Activated CD4-positive, alpha-beta T cell treated with anti-CD3 and anti-CD28 coated beads for 36 hours (primary cell): ENCODE measurements at regions of chr5 and their contacts with region 1.

Region 1: DNA sequence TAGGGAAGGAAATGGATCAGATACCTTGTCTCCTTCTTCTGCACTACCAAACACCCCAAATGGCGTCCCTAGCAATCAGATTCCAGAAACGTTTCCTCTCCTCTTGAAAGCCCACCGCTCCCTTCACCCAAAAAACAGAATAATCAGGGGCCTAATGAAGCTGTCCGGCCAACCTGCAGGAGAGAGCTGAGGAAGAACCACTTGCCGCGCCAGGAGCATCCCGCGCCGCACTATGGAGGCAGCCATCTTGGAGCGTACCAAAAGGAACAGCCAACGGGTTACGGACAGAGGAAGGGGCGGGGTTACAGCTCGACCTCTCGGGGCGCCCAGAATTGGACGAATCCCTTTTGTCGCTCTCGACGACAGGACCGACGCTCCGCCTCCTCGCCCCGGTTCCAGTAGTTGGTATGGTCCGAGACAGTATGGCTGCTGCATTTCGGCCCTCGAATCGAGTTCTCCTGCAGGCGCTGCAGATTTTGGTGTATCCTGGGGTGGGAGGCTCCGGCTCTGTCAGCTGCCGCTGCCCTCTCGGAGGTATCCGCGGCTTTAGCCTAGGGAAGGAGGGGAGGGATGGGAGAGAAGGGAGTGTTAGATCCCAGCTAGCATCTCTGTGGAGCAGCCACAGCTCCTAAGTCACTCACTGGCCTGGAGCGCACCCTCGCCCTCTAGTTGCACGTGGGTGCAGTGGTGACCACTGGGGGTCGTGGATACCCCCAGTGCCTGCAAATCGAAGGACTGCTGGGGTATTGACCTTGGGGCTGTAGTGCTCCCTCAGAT is at the starts of genes MRPS27 and PTCD2:
- DNase-seq: peak; percentile 97
- ATAC-seq: peak; percentile 99
- H3K4me3 Mint-ChIP-seq: peak within 1 kb of the TSS; percentile 99
- H3K27ac Mint-ChIP-seq: peak within 1 kb of the TSS; percentile 93
- H3K4me1 Mint-ChIP-seq: peaks cover 38% of the 10 kb centered on the region
- H3K27me3 Mint-ChIP-seq: no peaks in the 10 kb centered on the region
- total RNA-seq, gene MRPS27: 93.3 to 113 TPM
- total RNA-seq, gene PTCD2: 10.4 to 14.1 TPM

Region 2: DNA sequence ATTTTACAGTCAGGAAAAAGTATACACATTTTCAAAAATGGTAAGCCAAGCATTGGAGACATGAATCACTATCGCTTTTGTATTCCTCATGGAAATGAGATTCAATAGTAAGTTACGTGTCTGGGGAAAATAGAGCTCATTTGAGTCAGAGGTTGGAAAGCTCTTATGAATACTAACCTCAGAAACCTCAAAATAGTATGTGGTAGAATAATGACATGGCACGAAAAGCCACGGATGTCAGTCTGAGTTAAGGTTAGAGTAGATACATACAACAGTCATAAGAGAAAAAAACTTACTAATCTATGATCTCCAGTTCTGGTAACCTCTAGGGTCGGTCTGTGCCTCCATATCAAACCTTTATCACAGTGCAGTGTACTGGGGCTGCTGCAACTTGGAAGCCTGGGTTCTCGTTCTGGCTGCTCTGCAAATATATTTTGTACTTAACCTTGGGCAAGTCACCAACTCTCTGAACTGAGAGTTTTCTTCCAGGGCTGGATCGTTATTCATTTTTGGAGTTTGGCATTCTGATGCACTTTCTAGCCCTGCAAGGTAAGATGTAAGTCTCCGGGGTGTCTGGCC is 181.1 kb before region 1 on chr5:
- CTCF ChIA-PET with region 1: no interaction called
- POLR2A ChIA-PET with region 1: no interaction called
- intact Hi-C with region 1: no loop called
- DNase-seq: peak; percentile 32
- ATAC-seq: peak; percentile 100
- H3K4me3 Mint-ChIP-seq: no peak overlapping the region
- H3K27ac Mint-ChIP-seq: peak overlapping the region; percentile 33
- H3K4me1 Mint-ChIP-seq: peaks cover 15% of the 10 kb centered on the region
- H3K27me3 Mint-ChIP-seq: peaks cover 53% of the 10 kb centered on the region

Region 3: GRCh38 chr5:72347801-72348305 is 27.7 kb after region 1 on chr5:
- CTCF ChIA-PET with region 1: interaction called, 3 read pairs
- POLR2A ChIA-PET with region 1: no interaction called
- intact Hi-C with region 1: loop called in 1 of 2 experiments (anchors 1 kb)
- DNase-seq: peak; percentile 32
- ATAC-seq: peak; percentile 93
- H3K4me3 Mint-ChIP-seq: no peak overlapping the region
- H3K27ac Mint-ChIP-seq: peak overlapping the region; percentile 82
- H3K4me1 Mint-ChIP-seq: peaks cover 38% of the 10 kb centered on the region
- H3K27me3 Mint-ChIP-seq: no peaks in the 10 kb centered on the region

Region 4: DNA sequence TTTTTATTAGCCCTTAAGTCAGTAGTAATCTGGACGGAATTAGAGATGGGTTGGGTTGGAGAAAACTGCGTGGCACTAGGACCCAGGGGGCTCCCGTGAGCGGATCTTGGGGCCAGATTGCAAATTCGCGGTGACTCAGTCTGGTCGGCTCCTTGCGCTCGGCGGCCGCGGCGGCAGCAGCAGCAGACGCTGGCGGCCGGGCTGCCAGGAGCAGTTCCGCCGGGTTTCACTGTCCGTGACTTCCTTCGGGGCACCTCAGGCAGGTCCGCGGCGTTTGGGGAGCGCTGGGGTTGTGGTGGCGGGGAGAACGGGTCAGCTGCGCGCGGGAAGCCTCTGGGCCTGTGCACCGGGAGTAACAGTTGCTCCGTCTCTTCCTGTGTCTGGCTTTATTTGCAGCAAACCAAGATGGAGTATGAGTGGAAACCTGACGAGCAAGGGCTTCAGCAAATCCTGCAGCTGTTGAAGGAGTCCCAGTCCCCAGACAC is 527.9 kb after region 1 on chr5:
- CTCF ChIA-PET with region 1: no interaction called
- POLR2A ChIA-PET with region 1: interaction called, 3 read pairs
- intact Hi-C with region 1: loop called (anchors 1 to 5 kb)
- DNase-seq: peak; percentile 92
- ATAC-seq: peak; percentile 88
- H3K4me3 Mint-ChIP-seq: peak overlapping the region; percentile 92
- H3K27ac Mint-ChIP-seq: peak overlapping the region; percentile 97
- H3K4me1 Mint-ChIP-seq: peaks cover 45% of the 10 kb centered on the region
- H3K27me3 Mint-ChIP-seq: no peaks in the 10 kb centered on the region